CD4-positive, alpha-beta T cell (primary cell): ENCODE measurements at regions of chr2 and their contacts with region 1.

Region 1: GRCh38 chr2:11465497-11466406 is at the start of gene E2F6:
- DNase-seq: peak; percentile 68 to 88 (median 81)
- ATAC-seq: peak; percentile 81
- H3K4me3 ChIP-seq: peak within 1 kb of the TSS; percentile 92
- H3K4me3 Mint-ChIP-seq: peak within 1 kb of the TSS; percentile 98
- H3K27ac ChIP-seq: peak within 1 kb of the TSS in 1 of 2 donors; percentile 11
- H3K27ac Mint-ChIP-seq: peak within 1 kb of the TSS; percentile 81
- H3K4me1 ChIP-seq: peaks cover 21% of the 10 kb centered on the region
- H3K4me1 Mint-ChIP-seq: peaks cover 49% of the 10 kb centered on the region
- H3K27me3 ChIP-seq: no peaks in the 10 kb centered on the region
- H3K27me3 Mint-ChIP-seq: no peaks in the 10 kb centered on the region
- CTCF ChIP-seq: no peak
- total RNA-seq, gene E2F6: 3.5 to 4.2 TPM

Region 2: GRCh38 chr2:10688921-10689807 is 776.6 kb before region 1 on chr2:
- CTCF ChIA-PET with region 1: no interaction called
- POLR2A ChIA-PET with region 1: no interaction called
- intact Hi-C with region 1: loop called in 1 of 2 experiments (anchors 10 kb)
- DNase-seq: peak in 3 of 14 experiments; percentile 3 to 9 (median 7)
- ATAC-seq: peak; percentile 16
- H3K4me3 ChIP-seq: peak overlapping the region; percentile 91
- H3K4me3 Mint-ChIP-seq: no peak overlapping the region
- H3K27ac ChIP-seq: peak overlapping the region; percentile 88 to 89
- H3K27ac Mint-ChIP-seq: no peak overlapping the region
- H3K4me1 ChIP-seq: peaks cover 30% of the 10 kb centered on the region
- H3K4me1 Mint-ChIP-seq: peaks cover 12% of the 10 kb centered on the region
- H3K27me3 ChIP-seq: no peaks in the 10 kb centered on the region
- H3K27me3 Mint-ChIP-seq: no peaks in the 10 kb centered on the region
- CTCF ChIP-seq: no peak

Region 3: DNA sequence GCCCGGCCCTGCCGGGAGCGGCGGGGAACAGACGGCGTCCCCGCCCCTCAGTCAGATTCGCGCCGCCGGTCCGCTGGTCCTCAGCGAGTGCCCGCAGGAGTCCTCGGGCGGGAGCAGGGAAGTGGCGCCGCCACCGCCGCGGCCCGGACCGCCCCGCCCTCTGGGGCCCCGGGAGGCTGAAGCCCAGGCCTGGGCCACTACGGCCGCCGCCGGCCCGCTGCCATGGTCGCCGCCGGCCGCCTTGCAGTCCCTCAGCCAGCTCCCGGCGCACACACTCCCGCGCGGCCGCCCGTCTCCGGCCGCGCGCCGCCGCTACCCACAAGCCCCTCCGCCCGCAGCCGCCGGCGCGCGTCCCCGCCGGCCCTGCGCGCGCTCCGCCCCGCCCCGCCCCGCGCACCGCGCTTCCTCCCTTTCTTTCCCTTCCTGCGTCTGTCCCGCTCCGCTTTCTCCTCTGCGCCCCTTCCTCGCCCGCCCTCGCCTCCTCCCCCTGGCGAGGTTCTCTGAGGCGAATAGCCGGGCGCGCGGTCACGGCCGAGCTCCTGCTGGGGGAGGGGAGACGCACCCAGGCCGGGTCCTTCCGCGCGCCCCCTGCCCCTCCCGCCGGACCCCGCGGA is 121.3 kb before region 1 on chr2 and contains the start of gene ROCK2:
- CTCF ChIA-PET with region 1: no interaction called
- POLR2A ChIA-PET with region 1: no interaction called
- intact Hi-C with region 1: loop called in 1 of 2 experiments (anchors 5 kb)
- DNase-seq: peak; percentile 42 to 83 (median 59)
- ATAC-seq: peak; percentile 68
- H3K4me3 ChIP-seq: peak within 1 kb of the TSS; percentile 88
- H3K4me3 Mint-ChIP-seq: peak within 1 kb of the TSS; percentile 98
- H3K27ac ChIP-seq: peak within 1 kb of the TSS; percentile 7 to 42
- H3K27ac Mint-ChIP-seq: peak within 1 kb of the TSS; percentile 88
- H3K4me1 ChIP-seq: peaks cover 16% of the 10 kb centered on the region
- H3K4me1 Mint-ChIP-seq: peaks cover 44% of the 10 kb centered on the region
- H3K27me3 ChIP-seq: no peaks in the 10 kb centered on the region
- H3K27me3 Mint-ChIP-seq: no peaks in the 10 kb centered on the region
- CTCF ChIP-seq: no peak
- total RNA-seq, gene ROCK2: 6.9 to 9.4 TPM